Panc1 (cell line): ENCODE measurements at regions of chr6 and their contacts with region 1.

Region 1: GRCh38 chr6:125818225-125818657 is 27.5 kb downstream of the NCOA7 start:
- DNase-seq: no peak
- ATAC-seq: no peak
- H3K4me3 ChIP-seq: no peak overlapping the region
- H3K27ac ChIP-seq: no peak overlapping the region; the same call in 1 of the 2 replicates
- H3K4me1 ChIP-seq: peaks cover 41% of the 10 kb centered on the region
- H3K27me3 ChIP-seq: no peaks in the 10 kb centered on the region
- CTCF ChIP-seq: no peak

Region 2: DNA sequence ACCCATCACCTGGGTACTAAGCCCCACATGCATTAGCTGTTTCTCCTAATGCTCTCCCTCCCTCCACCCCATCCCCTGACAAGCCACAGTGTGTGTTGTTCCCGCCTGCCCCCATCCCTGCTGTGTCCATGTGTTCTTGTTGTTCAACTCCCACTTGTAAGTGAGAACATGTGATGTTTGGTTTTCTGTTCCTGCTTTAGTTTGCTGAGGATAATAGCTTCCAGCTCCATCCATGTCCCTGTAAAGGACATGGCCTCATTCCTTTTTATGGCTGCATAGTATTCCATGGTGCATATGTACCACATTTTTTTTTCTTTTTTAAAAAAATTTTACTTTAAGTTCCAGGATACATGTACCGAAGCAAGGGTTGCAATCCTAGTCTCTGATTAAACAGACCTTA is 779.3 kb before region 1 on chr6:
- CTCF ChIA-PET with region 1: no interaction called
- POLR2A ChIA-PET with region 1: interaction called, 21 read pairs
- in situ Hi-C with region 1: no loop called
- intact Hi-C with region 1: no loop called
- DNase-seq: no peak
- ATAC-seq: no peak
- H3K4me3 ChIP-seq: no peak overlapping the region
- H3K27ac ChIP-seq: no peak overlapping the region
- H3K4me1 ChIP-seq: no peaks in the 10 kb centered on the region
- H3K27me3 ChIP-seq: no peaks in the 10 kb centered on the region
- CTCF ChIP-seq: no peak

Region 3: DNA sequence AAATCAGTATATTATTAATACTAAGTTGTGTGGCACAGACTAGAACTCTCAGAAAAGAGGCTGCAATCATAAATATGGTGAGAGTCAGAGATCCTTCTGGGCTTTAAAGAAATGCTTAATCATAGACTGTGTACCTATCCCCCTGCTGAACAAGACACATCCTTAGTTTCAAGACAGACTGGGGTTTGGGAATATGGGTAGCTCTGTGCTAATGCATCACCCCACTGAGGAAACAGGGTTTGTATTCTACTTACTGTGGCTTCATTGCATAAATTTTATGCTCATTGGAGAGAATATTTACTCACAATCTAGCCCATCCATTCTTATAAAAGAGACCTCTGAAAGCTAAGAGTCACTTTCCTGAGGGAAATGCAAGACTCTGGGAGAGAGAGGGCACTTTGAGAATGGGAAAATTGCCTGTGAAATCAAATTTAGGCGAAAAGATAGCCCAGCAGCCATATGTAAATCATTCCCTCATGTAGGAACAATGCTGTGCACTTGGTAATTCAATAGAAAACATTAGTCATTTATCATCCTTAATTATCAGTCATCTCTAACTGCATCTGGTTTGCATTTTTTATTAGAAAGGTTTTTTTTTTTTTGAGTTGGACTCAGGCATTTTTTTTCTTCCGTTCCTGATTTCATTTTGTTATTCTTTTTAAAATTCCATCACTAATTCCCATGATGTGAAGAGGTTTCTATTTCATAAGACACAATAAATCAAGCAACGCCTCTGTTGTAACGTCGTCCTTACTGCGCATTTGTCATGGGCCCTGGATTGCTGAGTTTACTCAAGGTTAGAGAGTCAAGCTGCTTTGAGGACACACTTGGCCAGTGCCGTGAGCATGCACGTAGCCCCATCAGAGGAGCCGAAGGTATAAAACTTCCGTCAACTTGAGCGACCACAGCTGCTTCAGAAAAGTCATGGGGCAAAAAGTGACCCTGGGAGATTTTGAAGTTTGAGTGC is 259.9 kb after region 1 on chr6:
- CTCF ChIA-PET with region 1: no interaction called
- POLR2A ChIA-PET with region 1: no interaction called
- in situ Hi-C with region 1: no loop called
- intact Hi-C with region 1: no loop called
- DNase-seq: no peak
- ATAC-seq: no peak
- H3K4me3 ChIP-seq: no peak overlapping the region
- H3K27ac ChIP-seq: no peak overlapping the region
- H3K4me1 ChIP-seq: no peaks in the 10 kb centered on the region
- H3K27me3 ChIP-seq: no peaks in the 10 kb centered on the region
- CTCF ChIP-seq: no peak

Region 4: DNA sequence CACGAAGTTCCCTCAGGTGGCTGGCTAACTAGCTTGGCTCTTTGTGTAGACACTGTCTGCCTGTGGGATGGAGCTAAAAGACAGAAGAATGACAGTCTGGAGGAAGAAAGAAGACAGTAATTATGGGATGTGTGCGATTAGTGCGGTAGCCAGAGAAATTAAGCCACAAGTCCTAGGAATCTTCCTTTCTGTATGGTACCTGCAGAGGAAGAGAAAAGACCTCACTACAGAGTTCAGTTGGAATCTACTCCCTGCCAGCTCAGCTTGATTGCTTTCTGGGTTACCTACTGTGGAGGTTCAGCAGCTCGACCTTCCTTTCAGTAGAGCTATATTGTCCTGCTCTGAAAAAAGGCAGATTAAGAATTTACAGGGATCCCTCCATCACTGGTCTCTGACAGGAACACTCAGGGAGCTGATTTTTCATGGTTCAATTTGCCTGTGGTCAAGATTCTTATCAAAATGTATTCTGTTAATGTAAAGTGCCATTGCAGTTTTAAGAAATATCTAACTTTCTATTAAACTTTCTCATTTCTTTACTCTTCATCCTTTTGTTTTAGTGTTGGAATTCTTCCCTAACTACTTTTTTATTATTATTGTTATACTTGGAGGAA is 708.9 kb after region 1 on chr6:
- CTCF ChIA-PET with region 1: no interaction called
- POLR2A ChIA-PET with region 1: no interaction called
- in situ Hi-C with region 1: no loop called
- intact Hi-C with region 1: no loop called
- DNase-seq: no peak
- ATAC-seq: no peak
- H3K4me3 ChIP-seq: no peak overlapping the region
- H3K27ac ChIP-seq: no peak overlapping the region
- H3K4me1 ChIP-seq: no peaks in the 10 kb centered on the region
- H3K27me3 ChIP-seq: no peaks in the 10 kb centered on the region
- CTCF ChIP-seq: no peak